B cell (primary cell): ENCODE measurements at regions of chr19 and their contacts with region 1.

Region 1: DNA sequence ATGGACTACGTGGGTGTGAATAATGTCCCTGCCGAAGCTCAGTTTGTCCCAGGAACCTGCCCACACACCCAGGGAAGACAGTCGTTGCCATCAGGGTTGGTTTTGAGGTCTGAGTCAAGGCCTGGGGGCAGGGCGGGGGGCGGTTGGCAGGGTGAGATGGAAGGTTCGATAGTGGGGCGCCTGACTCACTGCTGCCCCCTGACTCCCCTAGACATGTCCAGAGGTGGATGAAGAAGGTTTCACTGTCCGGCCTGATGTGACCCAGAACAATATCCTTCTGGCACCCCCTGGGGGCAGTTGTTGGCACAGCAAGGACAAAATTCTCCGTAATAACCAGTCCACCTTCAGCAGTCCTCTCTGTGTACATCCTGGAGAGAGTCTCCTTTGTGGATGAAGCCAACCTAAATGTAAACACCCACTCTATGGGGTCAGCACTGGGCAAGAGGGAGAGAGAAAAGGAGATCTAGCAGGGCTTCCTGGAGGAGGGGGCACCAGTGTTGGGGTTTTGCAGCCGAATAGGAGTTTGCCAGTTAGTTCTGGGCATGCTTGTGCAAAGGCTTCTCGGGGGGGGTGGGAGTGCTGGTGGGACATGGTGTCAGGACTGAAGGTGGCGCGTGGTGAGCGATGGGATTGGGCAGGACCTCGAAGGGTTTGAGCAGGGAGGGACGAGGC is 19.6 kb upstream of the B3GNT3 start:
- DNase-seq: peak; percentile 57
- ATAC-seq: no peak
- H3K4me3 ChIP-seq: peak overlapping the region in 1 of 5 experiments; percentile 22
- H3K4me3 Mint-ChIP-seq: peak overlapping the region; percentile 88
- H3K27ac ChIP-seq: peak overlapping the region; percentile 90
- H3K27ac Mint-ChIP-seq: peak overlapping the region; percentile 100
- H3K4me1 ChIP-seq: peaks cover 42 to 49% of the 10 kb centered on the region in 2 donors
- H3K4me1 Mint-ChIP-seq: peaks cover 41% of the 10 kb centered on the region
- H3K27me3 ChIP-seq: no peaks in the 10 kb centered on the region
- H3K27me3 Mint-ChIP-seq: no peaks in the 10 kb centered on the region
- CTCF ChIP-seq: peak; percentile 43

Region 2: DNA sequence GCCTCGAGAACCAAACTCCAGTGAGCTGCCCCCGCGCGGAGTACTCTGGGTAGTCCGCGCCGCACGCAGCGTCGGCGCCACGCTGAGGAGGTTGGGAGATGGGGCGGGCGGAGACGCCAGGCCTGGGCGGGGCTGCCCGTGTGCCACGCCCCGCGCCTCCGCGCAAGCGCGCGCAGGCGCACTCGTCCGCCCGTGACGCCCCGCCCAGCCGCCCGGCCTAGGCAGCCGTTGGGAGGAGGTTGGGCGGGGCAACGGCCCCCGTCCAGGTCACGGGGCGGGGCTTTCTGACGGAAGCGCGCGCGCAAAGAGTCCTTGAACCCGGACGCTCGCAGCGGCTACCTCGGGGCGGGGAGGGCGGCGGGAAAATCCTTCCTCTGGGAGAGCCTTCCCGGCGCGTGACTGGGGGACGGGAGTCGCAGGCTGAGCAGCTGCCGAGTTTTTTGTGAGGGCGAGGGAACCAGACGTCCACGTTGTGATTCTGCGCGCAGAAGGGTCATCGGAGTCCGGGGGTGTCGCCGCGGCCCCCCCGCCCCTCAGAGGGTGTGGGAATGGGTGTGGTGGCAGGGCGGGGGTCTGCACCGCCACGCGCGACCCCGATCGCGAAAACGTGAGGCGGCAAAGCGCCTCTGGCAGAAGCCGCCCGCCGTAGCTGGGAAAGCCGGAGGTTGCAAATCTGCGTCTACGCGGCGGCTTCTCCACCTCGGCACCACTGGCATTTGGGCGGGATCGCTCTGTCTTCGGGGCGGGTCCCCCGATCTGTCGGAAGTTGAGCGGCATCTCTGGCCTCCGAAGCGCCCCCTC is 1147.0 kb before region 1 on chr19 and contains the start of gene MED26:
- CTCF ChIA-PET with region 1: no interaction called
- POLR2A ChIA-PET with region 1: interaction called, 12 read pairs
- intact Hi-C with region 1: no loop called
- DNase-seq: peak; percentile 97
- ATAC-seq: peak; percentile 93
- H3K4me3 ChIP-seq: peak within 1 kb of the TSS; percentile 18 to 93 (median 87)
- H3K4me3 Mint-ChIP-seq: peak within 1 kb of the TSS; percentile 97
- H3K27ac ChIP-seq: peak within 1 kb of the TSS; percentile 87 to 93
- H3K27ac Mint-ChIP-seq: peak within 1 kb of the TSS; percentile 98
- H3K4me1 ChIP-seq: peaks cover 23 to 27% of the 10 kb centered on the region in 2 donors
- H3K4me1 Mint-ChIP-seq: peaks cover 53% of the 10 kb centered on the region
- H3K27me3 ChIP-seq: no peaks in the 10 kb centered on the region
- H3K27me3 Mint-ChIP-seq: no peaks in the 10 kb centered on the region
- CTCF ChIP-seq: no peak
- total RNA-seq, gene MED26: 32.2 and 33.6 TPM in 2 replicates

Region 3: DNA sequence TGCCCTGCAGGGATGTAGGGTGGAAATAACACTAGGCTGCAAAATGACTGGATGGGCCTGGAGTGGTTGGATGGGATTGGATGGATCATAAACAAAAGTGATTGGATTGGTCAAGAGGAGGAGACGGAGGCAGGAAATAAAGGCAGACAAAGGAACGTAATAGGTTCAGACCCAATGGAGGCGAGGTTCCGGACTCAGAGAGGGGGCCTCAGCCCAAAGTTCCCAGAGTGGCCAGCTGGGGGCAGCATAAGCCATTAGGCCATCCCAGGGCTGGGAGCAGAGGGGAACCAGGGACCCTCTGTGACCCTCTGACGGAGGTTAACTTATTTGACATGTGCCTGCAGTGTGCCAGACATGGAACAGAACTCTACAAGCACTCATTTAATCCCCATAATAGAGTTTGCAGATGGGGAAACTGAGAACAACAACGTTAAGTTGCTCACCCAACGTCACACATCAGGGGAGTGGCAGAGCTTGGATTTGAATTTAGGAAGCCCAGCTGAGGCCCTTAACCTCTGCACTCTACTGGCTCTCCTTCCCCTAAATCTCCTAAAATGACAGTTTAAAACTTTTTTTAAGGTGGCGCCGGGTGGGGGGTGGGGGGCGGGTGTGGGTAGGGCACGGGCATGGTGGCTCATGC is 71.4 kb before region 1 on chr19:
- CTCF ChIA-PET with region 1: interaction called, 29 read pairs
- POLR2A ChIA-PET with region 1: interaction called, 5 read pairs
- intact Hi-C with region 1: no loop called
- DNase-seq: peak; percentile 80
- ATAC-seq: peak; percentile 93
- H3K4me3 ChIP-seq: no peak overlapping the region
- H3K4me3 Mint-ChIP-seq: no peak overlapping the region
- H3K27ac ChIP-seq: no peak overlapping the region
- H3K27ac Mint-ChIP-seq: peak overlapping the region; percentile 11
- H3K4me1 ChIP-seq: no peaks in the 10 kb centered on the region
- H3K4me1 Mint-ChIP-seq: peaks cover 5% of the 10 kb centered on the region
- H3K27me3 ChIP-seq: peaks cover 0 to 9% (median under 1%) of the 10 kb centered on the region in 4 experiments
- H3K27me3 Mint-ChIP-seq: peaks cover 11% of the 10 kb centered on the region
- CTCF ChIP-seq: peak; percentile 87

Region 4: DNA sequence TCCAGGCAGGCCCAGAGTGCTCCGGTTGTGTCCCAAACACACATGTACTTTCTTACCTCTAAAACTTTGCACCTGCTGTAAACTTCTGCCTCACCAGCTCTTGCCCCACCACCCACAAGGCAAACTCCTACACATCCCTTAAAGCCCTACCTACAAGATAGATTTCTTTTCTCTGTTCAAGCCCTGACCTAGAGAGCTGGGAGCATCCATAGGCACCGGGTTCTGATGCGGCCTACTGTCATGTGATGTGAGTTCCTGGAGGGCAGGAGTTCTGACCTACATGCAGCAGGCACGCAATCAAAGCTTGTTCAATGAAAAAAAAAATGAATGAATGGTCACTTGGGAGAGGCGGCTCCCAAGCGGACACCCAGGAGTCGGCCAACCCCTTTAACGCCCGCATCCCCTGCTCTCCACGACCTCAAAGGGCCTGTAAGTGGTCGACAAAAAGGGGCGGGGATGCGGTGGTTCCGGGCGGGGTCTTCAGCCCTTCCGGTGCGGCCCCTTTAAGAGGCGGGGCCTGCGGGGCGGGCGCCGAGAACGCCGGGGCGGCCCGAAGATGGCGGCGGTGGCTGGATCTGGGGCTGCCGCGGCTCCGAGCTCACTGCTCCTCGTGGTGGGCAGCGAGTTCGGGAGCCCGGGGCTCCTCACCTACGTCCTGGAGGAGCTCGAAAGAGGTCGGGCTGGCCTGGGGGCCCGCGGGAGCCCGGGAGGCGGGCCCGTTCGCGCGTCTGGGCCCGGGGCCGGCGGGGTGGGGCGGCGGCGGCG is 56.3 kb before region 1 on chr19 and contains the start of gene MAP1S:
- CTCF ChIA-PET with region 1: interaction called, 4 read pairs
- POLR2A ChIA-PET with region 1: no interaction called
- intact Hi-C with region 1: loop called (anchors 1 kb)
- DNase-seq: peak; percentile 72
- ATAC-seq: peak; percentile 93
- H3K4me3 ChIP-seq: peak within 1 kb of the TSS; percentile 78 to 94 (median 88)
- H3K4me3 Mint-ChIP-seq: peak within 1 kb of the TSS; percentile 92
- H3K27ac ChIP-seq: peak within 1 kb of the TSS; percentile 27 to 73
- H3K27ac Mint-ChIP-seq: peak within 1 kb of the TSS; percentile 82
- H3K4me1 ChIP-seq: peaks cover 32 to 39% of the 10 kb centered on the region in 2 donors
- H3K4me1 Mint-ChIP-seq: peaks cover 36% of the 10 kb centered on the region
- H3K27me3 ChIP-seq: no peaks in the 10 kb centered on the region
- H3K27me3 Mint-ChIP-seq: no peaks in the 10 kb centered on the region
- CTCF ChIP-seq: no peak
- total RNA-seq, gene MAP1S: 81.6 and 83.0 TPM in 2 replicates

Region 5: DNA sequence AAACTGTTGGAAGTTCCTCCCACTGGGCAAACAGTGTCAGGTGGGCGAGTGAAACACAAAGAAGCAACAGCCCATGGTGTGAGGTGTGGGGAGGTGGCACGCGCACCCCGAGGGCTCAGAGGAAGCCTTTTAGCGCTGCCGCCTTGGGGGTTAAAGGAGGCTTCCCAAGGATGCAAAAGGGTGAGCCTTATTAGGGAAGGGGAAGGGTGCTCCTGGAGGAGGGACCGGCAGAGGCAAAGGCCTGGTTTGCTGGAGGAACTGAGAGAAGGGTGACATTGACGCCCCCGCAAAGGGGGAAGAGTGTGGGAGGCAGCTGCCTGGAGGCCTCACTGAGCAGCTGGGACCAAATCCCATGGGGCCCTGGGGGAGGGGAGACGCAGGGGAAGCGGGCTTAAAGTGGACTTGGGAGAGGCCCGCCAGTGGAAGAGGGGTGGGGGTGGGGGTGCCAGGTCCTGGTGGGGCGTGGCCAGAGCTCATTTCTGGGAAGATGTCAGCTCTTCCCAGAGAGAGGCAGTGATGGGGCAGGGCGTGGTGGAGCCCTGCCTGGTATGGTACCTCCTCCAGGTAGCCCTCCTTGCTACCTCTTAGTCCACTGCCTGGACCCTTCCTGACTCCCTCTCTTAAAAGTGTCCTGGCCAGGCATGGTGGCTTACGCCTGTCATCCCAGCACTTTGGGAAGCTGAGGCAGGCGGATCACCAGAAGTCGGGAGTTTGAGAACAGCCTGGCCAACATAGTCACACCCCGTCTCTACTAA is 36.1 kb before region 1 on chr19:
- CTCF ChIA-PET with region 1: interaction called, 5 read pairs
- POLR2A ChIA-PET with region 1: interaction called, 5 read pairs
- intact Hi-C with region 1: loop called (anchors 1 kb)
- DNase-seq: peak; percentile 73
- ATAC-seq: peak; percentile 79
- H3K4me3 ChIP-seq: peak overlapping the region in 1 of 5 experiments; percentile 4
- H3K4me3 Mint-ChIP-seq: peak overlapping the region; percentile 85
- H3K27ac ChIP-seq: peak overlapping the region; percentile 50 to 67
- H3K27ac Mint-ChIP-seq: peak overlapping the region; percentile 90
- H3K4me1 ChIP-seq: peaks cover 22 to 37% of the 10 kb centered on the region in 2 donors
- H3K4me1 Mint-ChIP-seq: peaks cover 42% of the 10 kb centered on the region
- H3K27me3 ChIP-seq: no peaks in the 10 kb centered on the region
- H3K27me3 Mint-ChIP-seq: no peaks in the 10 kb centered on the region
- CTCF ChIP-seq: no peak

Region 6: DNA sequence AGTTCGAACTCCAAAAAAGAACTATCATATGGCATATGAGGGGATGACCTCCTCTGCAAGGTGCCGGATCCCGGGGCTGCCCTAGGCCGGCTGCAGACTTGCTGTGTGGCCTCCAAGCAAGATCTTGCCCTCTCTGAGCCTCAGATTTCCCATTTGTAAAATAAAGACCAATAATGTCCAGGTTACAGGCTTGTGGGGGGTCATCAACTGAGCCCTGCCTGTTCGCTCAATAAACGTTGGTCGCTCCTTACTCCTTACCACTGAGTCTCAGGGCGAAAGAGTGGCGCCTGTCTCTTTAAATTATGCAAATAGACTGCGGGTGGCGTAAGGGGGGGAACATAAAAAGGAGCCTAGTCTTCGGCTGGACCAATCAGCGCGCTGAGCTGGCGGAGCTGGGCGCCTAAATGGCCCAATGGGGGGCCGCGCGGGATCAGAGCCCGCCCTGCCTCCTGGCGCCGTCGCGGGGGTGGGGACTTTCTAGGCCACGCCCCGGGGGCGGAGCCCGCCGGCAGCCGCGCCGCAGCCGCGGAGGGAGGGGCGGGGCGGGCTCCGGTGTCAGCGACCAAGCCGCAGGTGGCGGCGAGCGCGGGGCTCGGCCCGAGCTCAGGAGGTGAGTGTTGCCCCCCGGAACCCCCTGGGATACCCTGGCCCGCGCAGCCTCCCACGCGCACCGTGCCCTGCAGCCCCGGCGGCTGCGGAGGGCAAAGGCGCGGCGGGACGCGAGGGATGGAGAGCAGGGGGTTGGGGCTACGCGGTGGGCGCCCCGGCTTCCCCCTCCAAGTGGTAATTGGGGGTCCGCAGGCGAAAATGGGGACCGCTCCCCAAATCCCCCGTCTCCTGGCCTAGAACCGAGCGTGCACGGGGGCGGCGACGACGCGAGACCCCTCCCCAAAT is 27.9 kb before region 1 on chr19:
- CTCF ChIA-PET with region 1: interaction called, 13 read pairs
- POLR2A ChIA-PET with region 1: interaction called, 12 read pairs
- intact Hi-C with region 1: loop called (anchors 1 kb)
- DNase-seq: peak; percentile 97
- ATAC-seq: peak; percentile 80
- H3K4me3 ChIP-seq: peak overlapping the region; percentile 38 to 72 (median 70)
- H3K4me3 Mint-ChIP-seq: peak overlapping the region; percentile 89
- H3K27ac ChIP-seq: peak overlapping the region in 1 of 2 donors; percentile 26
- H3K27ac Mint-ChIP-seq: peak overlapping the region; percentile 71
- H3K4me1 ChIP-seq: peaks cover 38 to 60% of the 10 kb centered on the region in 2 donors
- H3K4me1 Mint-ChIP-seq: peaks cover 51% of the 10 kb centered on the region
- H3K27me3 ChIP-seq: no peaks in the 10 kb centered on the region
- H3K27me3 Mint-ChIP-seq: no peaks in the 10 kb centered on the region
- CTCF ChIP-seq: no peak

Region 7: DNA sequence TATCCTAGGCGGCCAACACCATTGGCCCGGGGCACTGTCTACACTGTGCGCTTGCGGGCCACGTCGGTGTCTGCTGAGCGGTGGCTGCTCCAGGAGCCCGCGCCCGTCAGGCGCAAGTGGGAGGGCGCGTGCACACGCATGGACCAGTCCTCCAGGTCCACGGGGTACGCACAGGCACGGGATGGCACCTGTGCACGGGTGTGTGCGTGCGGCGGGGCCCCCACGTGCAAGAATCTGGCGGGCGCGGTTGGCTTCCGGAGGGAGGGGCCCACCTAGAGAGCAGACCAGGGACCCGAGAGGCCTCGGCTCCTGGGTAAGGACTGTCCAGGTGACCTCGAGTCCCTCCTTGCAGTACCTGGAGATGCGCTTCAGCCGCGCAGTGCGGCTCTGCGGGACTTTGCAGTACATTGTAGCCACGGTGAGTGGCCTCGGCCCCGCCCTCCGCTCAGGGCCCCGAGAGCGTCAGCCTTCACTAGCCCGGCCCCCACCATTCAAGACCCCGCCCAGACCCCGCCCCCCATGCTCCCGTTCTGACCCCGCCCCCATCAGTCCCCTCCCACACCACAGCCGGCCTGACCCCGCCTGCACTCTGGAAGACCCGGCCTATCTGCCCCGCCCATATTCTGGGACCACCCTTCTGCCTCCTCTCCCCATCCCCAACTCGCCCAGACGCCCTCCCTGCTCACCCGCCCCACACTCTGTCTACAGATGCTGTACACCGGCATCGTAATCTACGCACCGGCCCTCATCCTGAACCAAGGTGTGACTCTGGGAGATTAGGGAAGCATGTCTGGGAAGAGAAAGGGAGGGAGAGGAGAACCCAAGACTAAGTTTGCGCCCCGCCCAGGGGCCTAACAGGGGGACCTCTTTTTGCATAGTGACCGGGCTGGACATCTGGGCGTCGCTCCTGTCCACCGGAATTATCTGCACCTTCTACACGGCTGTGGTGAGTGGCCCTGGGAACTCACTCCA is 98.7 kb after region 1 on chr19:
- CTCF ChIA-PET with region 1: no interaction called
- POLR2A ChIA-PET with region 1: no interaction called
- intact Hi-C with region 1: no loop called
- DNase-seq: peak; percentile 84
- ATAC-seq: peak; percentile 81
- H3K4me3 ChIP-seq: peak overlapping the region in 4 of 5 experiments; percentile 38 to 53 (median 46)
- H3K4me3 Mint-ChIP-seq: peak overlapping the region; percentile 74
- H3K27ac ChIP-seq: no peak overlapping the region
- H3K27ac Mint-ChIP-seq: no peak overlapping the region
- H3K4me1 ChIP-seq: peaks cover 25 to 31% of the 10 kb centered on the region in 2 donors
- H3K4me1 Mint-ChIP-seq: peaks cover 20% of the 10 kb centered on the region
- H3K27me3 ChIP-seq: peaks cover 0 to 33% (median 15%) of the 10 kb centered on the region in 4 experiments
- H3K27me3 Mint-ChIP-seq: peaks cover 5% of the 10 kb centered on the region
- CTCF ChIP-seq: no peak